AG04450 (cell line): ENCODE measurements at regions of chr11 and their contacts with region 1.

Region 1: GRCh38 chr11:101390539-101390938 is 193.3 kb downstream of the TRPC6 start:
- DNase-seq: no peak
- H3K4me3 ChIP-seq: no peak overlapping the region
- H3K27ac ChIP-seq: no peak overlapping the region
- H3K27me3 ChIP-seq: no peaks in the 10 kb centered on the region
- CTCF ChIP-seq: peak; percentile 47

Region 2: DNA sequence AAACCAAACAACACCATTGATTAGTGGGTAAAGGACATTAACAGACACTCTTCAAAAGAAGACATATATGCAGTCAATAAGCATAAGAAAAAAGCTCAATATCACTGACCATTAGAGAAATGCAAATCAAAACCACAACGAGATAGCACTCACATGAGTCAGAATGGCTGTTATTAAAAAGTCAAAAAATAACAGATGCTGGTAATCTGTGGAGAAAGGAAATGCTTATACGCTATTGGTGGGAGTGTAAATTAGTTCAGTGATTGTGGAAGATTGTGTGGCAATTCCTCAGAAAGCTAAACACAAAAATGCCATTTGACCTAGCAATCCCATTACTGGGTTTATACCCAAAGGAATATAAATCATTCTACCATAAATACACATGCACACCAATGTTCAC is 10.7 kb after region 1 on chr11:
- CTCF ChIA-PET with region 1: interaction called, 12 read pairs
- POLR2A ChIA-PET with region 1: no interaction called
- DNase-seq: peak; percentile 30
- H3K4me3 ChIP-seq: no peak overlapping the region
- H3K27ac ChIP-seq: no peak overlapping the region
- H3K27me3 ChIP-seq: no peaks in the 10 kb centered on the region
- CTCF ChIP-seq: no peak

Region 3: DNA sequence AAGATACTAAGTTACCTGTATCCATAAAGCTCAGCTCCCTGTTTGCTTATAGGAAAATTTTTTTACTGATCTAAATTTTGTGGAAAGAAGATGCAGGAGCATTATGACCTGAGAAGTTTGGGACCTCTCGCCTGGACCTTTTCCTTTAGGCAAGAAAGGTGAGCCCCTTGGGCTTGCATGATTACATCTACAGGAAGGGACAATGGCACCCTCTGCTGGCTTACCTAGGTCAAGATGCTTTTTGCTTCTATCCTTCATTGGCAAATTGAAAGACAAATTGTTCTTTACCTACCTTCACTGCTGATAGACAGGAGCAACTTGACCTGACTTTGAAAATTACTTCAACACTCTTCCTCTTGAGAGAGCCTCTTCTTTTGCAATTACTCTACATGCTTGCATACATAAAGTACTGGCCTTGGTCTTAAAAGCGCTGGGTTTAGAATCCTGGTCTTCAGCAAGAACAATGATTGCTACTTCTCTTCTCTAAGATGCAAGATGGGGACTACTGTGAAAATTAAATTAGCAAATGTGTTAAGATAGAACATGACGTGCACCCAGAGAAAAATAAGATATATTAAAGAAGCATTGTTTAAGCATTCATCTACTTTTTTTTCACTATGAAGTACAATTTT is 46.1 kb after region 1 on chr11:
- CTCF ChIA-PET with region 1: interaction called, 89 read pairs
- POLR2A ChIA-PET with region 1: no interaction called
- DNase-seq: no peak
- H3K4me3 ChIP-seq: no peak overlapping the region
- H3K27ac ChIP-seq: no peak overlapping the region
- H3K27me3 ChIP-seq: no peaks in the 10 kb centered on the region
- CTCF ChIP-seq: peak; percentile 81